ENCODE measurements at regions of chr13 and their contacts with region 1.

Region 1: GRCh38 chr13:95191821-95192563 is 109.3 kb downstream of the ABCC4 start:
- DNase-seq: peak; percentile 87 to 90 (median 89)
- H3K4me3 ChIP-seq: no peak overlapping the region
- H3K27ac ChIP-seq: peak overlapping the region in 1 of 2 donors; percentile 17
- H3K4me1 ChIP-seq: peaks cover 0 to 15% (median 5%) of the 10 kb centered on the region in 3 donors
- H3K27me3 ChIP-seq: no peaks in the 10 kb centered on the region
- CTCF ChIP-seq: peak; percentile 91

Region 2: DNA sequence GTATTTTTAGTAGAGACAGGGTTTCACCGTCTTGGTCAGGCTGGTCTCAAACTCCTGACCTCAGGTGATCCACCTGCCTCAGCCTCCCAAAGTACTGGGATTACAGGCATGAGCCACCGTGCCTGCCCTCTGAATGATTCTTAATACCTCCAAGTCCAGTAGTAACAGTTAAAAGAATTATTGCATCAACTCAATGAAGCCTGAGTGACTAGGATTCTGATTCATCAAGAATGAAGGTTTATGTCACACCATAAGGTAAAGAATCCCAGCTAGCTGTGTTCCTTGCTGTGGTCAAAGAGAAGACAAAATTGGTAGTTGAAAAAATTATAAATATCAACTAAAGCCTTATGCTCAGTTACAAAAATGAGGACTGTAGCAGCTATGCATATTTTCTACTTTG is 190.4 kb after region 1 on chr13:
- intact Hi-C with region 1: loop called (anchors 5 kb)
- DNase-seq: no peak
- H3K4me3 ChIP-seq: no peak overlapping the region
- H3K27ac ChIP-seq: no peak overlapping the region
- H3K4me1 ChIP-seq: peaks cover 0 to 8% (median 3%) of the 10 kb centered on the region in 3 donors
- H3K27me3 ChIP-seq: no peaks in the 10 kb centered on the region
- CTCF ChIP-seq: no peak

Region 3: GRCh38 chr13:95403828-95404522 is 212.0 kb after region 1 on chr13:
- intact Hi-C with region 1: loop called (anchors 5 kb)
- DNase-seq: peak; percentile 85 to 92 (median 90)
- H3K4me3 ChIP-seq: peak overlapping the region; percentile 51 to 60 (median 51)
- H3K27ac ChIP-seq: no peak overlapping the region
- H3K4me1 ChIP-seq: peaks cover 0 to 3% (median 0%) of the 10 kb centered on the region in 3 donors
- H3K27me3 ChIP-seq: no peaks in the 10 kb centered on the region
- CTCF ChIP-seq: peak; percentile 98